ENCODE measurements at regions of chr1 and their contacts with region 1.

Region 1: GRCh38 chr1:119573886-119574285 is 66.9 kb downstream of the HSD3B1 start:
- DNase-seq: no peak
- H3K4me3 ChIP-seq: no peak overlapping the region
- H3K27ac ChIP-seq: no peak overlapping the region
- H3K4me1 ChIP-seq: peaks cover 5% of the 10 kb centered on the region
- H3K27me3 ChIP-seq: peaks cover 0 to 3% of the 10 kb centered on the region in 2 experiments
- CTCF ChIP-seq: no peak
- POLR2A ChIP-seq: no peak

Region 2: GRCh38 chr1:118371612-118372011 is 1202.3 kb before region 1 on chr1:
- CTCF ChIA-PET with region 1: no interaction called
- POLR2A ChIA-PET with region 1: no interaction called
- dilution Hi-C with region 1: no loop called
- intact Hi-C with region 1: no loop called
- DNase-seq: no peak
- H3K4me3 ChIP-seq: no peak overlapping the region
- H3K27ac ChIP-seq: no peak overlapping the region
- H3K4me1 ChIP-seq: no peaks in the 10 kb centered on the region
- H3K27me3 ChIP-seq: no peaks in the 10 kb centered on the region
- CTCF ChIP-seq: no peak
- POLR2A ChIP-seq: no peak

Region 3: GRCh38 chr1:119410961-119411360 is 162.9 kb before region 1 on chr1:
- CTCF ChIA-PET with region 1: no interaction called
- POLR2A ChIA-PET with region 1: no interaction called
- dilution Hi-C with region 1: no loop called
- intact Hi-C with region 1: no loop called
- DNase-seq: no peak
- H3K4me3 ChIP-seq: no peak overlapping the region
- H3K27ac ChIP-seq: no peak overlapping the region
- H3K4me1 ChIP-seq: no peaks in the 10 kb centered on the region
- H3K27me3 ChIP-seq: no peaks in the 10 kb centered on the region
- CTCF ChIP-seq: no peak
- POLR2A ChIP-seq: no peak

Region 4: GRCh38 chr1:119605686-119606085 is 31.8 kb after region 1 on chr1:
- CTCF ChIA-PET with region 1: no interaction called
- POLR2A ChIA-PET with region 1: no interaction called
- dilution Hi-C with region 1: no loop called
- intact Hi-C with region 1: loop called (anchors 5 kb)
- DNase-seq: no peak
- H3K4me3 ChIP-seq: no peak overlapping the region
- H3K27ac ChIP-seq: no peak overlapping the region
- H3K4me1 ChIP-seq: peaks cover 19% of the 10 kb centered on the region
- H3K27me3 ChIP-seq: no peaks in the 10 kb centered on the region
- CTCF ChIP-seq: no peak
- POLR2A ChIP-seq: no peak